GM10248 (cell line): ENCODE measurements at regions of chr12 and their contacts with region 1.

Region 1: GRCh38 chr12:113403435-113404415 is at the start of gene SDS:
- DNase-seq: no peak
- CTCF ChIP-seq: no peak

Region 2: DNA sequence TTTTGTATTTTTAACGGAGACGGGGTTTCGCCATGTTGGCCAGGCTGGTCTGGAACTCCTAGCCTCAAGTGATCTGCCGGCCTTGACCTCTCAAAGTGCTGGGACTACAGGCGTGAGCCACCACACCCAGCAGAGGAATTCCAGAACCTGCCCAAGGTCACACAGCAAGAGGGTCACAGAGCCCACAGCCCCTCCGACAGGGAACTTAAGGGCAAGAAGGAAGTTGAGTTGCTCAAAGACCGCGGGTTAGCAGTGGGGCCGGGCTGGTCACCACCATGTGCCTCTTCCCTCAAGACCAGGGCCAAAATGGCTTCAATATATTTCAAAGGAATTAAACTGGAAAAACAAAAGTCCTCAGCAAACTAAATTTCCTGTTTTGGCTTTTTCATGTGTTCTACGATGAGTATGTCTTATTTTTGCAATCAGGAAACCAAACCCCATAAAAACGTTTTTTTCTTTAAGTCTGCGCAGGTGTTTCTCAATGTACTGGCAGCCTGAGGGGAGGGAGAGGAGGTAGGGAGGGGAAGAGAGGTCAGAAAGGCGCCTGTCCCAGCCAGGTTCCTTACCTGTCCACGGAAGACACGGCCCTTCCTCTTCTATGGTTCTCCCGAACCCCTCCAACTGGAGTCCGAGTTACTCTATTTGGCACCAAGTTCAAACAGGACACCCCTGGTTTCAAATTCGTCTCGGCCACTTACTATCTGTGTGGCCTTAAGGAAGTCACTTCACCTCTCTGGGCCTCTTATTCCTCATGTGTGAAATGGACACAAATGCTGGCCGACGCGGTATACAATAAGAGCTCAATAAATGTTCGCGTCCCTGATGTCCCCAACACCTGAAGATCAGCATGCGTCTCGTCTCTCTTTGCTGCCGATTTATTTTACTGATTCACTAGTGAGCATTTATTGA is 69.6 kb before region 1 on chr12:
- CTCF ChIA-PET with region 1: no interaction called
- POLR2A ChIA-PET with region 1: interaction called, 10 read pairs
- DNase-seq: no peak
- CTCF ChIP-seq: no peak

Region 3: GRCh38 chr12:113378291-113378690 is 25.4 kb before region 1 on chr12:
- CTCF ChIA-PET with region 1: no interaction called
- POLR2A ChIA-PET with region 1: interaction called, 11 read pairs
- DNase-seq: no peak
- CTCF ChIP-seq: no peak

Region 4: DNA sequence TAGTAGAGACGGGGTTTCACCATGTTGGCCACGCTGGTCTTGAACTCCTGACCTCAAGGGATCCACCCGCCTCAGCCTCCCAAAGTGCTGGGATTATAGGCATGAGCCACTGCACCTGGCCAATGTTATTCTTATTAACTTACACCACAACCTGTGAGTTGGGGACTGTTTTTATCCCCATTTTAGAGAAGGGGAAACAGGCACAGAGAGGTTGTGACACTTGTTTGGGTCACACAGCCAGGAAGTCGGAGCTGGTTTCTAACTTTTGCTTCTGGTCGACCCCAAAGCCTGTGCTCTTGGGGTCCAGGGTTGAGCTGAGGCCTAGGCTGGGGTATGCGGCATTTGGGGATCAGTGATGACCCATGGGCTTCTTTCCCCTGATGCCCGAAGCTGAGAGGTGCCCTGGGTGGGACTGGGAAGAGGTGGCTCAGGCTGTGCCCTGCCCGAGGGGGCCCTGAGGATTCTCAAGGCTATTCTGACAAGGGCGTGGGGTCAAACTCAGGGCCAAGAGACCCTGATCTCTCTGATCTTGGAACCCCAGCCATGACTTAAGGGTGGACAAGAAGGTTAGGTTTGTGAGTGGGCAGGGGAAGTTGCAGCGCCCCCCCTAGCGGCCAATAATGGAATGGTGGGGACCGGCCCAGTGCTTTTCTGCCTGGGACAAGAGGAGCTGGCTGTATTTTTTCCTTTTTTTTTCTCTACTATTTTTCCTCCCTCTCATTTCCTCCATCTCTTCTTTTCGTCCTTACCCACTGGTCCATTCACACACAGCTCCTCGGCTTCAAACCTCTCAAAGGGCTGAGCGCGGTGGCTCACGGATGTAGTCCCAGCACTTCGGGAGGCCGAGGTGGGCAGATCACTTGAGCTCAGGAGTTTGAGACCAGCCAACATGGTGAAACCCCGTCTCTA is 21.4 kb after region 1 on chr12:
- CTCF ChIA-PET with region 1: interaction called, 17 read pairs
- POLR2A ChIA-PET with region 1: no interaction called
- DNase-seq: peak; percentile 73
- CTCF ChIP-seq: peak; percentile 69

Region 5: GRCh38 chr12:113609692-113610469 is 206.2 kb after region 1 on chr12:
- CTCF ChIA-PET with region 1: no interaction called
- POLR2A ChIA-PET with region 1: no interaction called
- DNase-seq: no peak
- CTCF ChIP-seq: no peak